Activated CD4-positive, alpha-beta T cell treated with anti-CD3 and anti-CD28 coated beads, Interleukin-2, amount 10 ng/mL, durations not matched to agents 24 days and 14 days (primary cell): ENCODE measurements at regions of chr3 and their contacts with region 1.

Region 1: GRCh38 chr3:112043603-112044201 is 9.2 kb downstream of the TMPRSS7 start:
- DNase-seq: peak; percentile 80
- H3K4me3 Mint-ChIP-seq: no peak overlapping the region
- H3K27ac Mint-ChIP-seq: no peak overlapping the region
- H3K4me1 Mint-ChIP-seq: peaks cover 5% of the 10 kb centered on the region
- H3K27me3 Mint-ChIP-seq: peaks cover 6% of the 10 kb centered on the region

Region 2: DNA sequence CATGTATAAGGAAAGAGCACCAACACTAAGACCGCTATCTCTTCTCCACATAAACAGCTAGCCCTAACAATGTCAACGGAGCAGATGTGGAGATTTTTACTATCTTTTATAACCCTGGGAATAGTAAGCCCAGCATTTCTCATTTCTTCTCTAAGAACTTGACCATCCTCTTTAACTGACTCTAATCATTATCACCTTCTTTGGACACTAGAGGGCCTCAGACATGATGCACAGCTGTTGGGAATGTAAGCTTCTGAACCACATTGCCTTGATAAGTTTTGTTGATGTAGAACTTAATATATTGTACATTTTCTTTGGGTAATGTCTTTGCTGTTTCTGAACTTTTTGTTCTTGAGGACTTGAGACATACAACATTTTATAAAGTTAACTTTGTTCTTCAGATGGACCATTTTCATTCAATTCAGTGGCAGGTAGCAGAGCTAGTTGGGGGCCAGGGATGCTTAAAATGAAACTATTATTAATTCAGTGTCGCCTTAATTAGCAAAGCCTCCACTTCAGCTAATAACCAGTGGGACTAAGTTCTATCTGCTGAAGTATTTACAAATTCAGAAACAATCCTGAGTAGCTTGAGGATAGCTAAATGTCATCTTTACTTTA is 54.5 kb before region 1 on chr3:
- intact Hi-C with region 1: loop called (anchors 1 kb)
- DNase-seq: peak; percentile 68
- H3K4me3 Mint-ChIP-seq: no peak overlapping the region
- H3K27ac Mint-ChIP-seq: no peak overlapping the region
- H3K4me1 Mint-ChIP-seq: peaks cover 38% of the 10 kb centered on the region
- H3K27me3 Mint-ChIP-seq: no peaks in the 10 kb centered on the region